CD8-positive, alpha-beta T cell (primary cell): ENCODE measurements at regions of chr17 and their contacts with region 1.

Region 1: GRCh38 chr17:7687908-7688807 is at the start of gene WRAP53:
- DNase-seq: peak; percentile 93 to 97 (median 95)
- ATAC-seq: peak; percentile 77
- H3K4me3 ChIP-seq: peak within 1 kb of the TSS; percentile 81 to 92
- H3K4me3 Mint-ChIP-seq: peak within 1 kb of the TSS; percentile 97
- H3K27ac ChIP-seq: peak within 1 kb of the TSS; percentile 98 to 100
- H3K27ac Mint-ChIP-seq: peak within 1 kb of the TSS; percentile 100
- H3K4me1 ChIP-seq: peaks cover 32% of the 10 kb centered on the region
- H3K4me1 Mint-ChIP-seq: peaks cover 37% of the 10 kb centered on the region
- H3K27me3 ChIP-seq: no peaks in the 10 kb centered on the region
- H3K27me3 Mint-ChIP-seq: no peaks in the 10 kb centered on the region
- CTCF ChIP-seq: peak; percentile 98
- total RNA-seq, gene WRAP53: 5.2 to 6.6 TPM

Region 2: GRCh38 chr17:7045909-7046724 is 642.0 kb before region 1 on chr17:
- CTCF ChIA-PET with region 1: interaction called, 3 read pairs
- POLR2A ChIA-PET with region 1: no interaction called
- intact Hi-C with region 1: loop called (anchors 1 to 5 kb)
- DNase-seq: peak in 6 of 9 experiments; percentile 43 to 88 (median 59)
- ATAC-seq: peak; percentile 34
- H3K4me3 ChIP-seq: peak overlapping the region; percentile 42 to 58
- H3K4me3 Mint-ChIP-seq: peak overlapping the region; percentile 79
- H3K27ac ChIP-seq: peak overlapping the region; percentile 47 to 73
- H3K27ac Mint-ChIP-seq: peak overlapping the region; percentile 88
- H3K4me1 ChIP-seq: peaks cover 35% of the 10 kb centered on the region
- H3K4me1 Mint-ChIP-seq: peaks cover 36% of the 10 kb centered on the region
- H3K27me3 ChIP-seq: no peaks in the 10 kb centered on the region
- H3K27me3 Mint-ChIP-seq: no peaks in the 10 kb centered on the region
- CTCF ChIP-seq: peak; percentile 89

Region 3: DNA sequence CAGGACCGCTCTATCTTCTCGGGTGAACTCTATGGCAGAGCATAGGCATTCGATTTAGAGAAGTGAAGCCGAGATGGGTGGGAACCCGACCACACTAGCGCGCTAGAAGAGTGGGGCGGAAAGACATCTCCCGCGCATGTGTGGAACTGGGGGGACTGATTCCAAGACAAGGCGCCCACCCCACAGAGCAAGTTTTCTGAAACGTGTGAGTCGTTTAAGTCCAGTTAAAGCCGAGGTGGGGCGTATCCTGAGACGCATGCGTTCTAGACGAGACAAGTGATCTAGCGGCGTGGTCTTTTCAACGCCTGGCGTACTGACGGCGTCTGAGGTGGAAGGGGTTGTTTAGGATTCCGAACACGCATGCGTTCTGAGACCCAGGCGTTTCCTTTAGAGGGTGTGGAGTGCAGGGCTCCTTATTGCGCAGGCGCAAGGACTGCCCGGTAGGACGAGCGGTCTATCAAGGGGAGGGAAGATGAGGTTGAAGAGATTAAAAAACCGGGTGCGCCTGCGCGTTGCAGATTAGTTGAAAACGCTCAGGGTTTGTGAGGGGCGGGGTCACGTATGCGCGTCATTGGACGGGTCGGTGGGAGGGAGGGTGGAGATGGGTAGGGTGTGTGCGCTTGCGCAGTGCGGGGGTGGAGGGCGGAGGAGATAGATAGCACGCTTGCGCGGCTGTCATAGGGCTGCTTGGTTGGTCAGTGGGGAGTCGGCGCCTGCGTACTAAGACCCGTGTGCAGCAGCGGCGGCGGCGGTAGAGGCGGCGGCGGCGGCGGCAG is 381.1 kb before region 1 on chr17 and contains the start of gene EIF5A:
- CTCF ChIA-PET with region 1: no interaction called
- POLR2A ChIA-PET with region 1: no interaction called
- intact Hi-C with region 1: loop called (anchors 1 to 2 kb)
- DNase-seq: peak; percentile 100
- ATAC-seq: peak; percentile 67
- H3K4me3 ChIP-seq: peak within 1 kb of the TSS; percentile 66 to 92
- H3K4me3 Mint-ChIP-seq: peak within 1 kb of the TSS; percentile 98
- H3K27ac ChIP-seq: peak within 1 kb of the TSS; percentile 91 to 94
- H3K27ac Mint-ChIP-seq: peak within 1 kb of the TSS; percentile 99
- H3K4me1 ChIP-seq: peaks cover 25% of the 10 kb centered on the region
- H3K4me1 Mint-ChIP-seq: peaks cover 40% of the 10 kb centered on the region
- H3K27me3 ChIP-seq: no peaks in the 10 kb centered on the region
- H3K27me3 Mint-ChIP-seq: no peaks in the 10 kb centered on the region
- CTCF ChIP-seq: no peak
- total RNA-seq, gene EIF5A: 581 to 613 TPM

Region 4: DNA sequence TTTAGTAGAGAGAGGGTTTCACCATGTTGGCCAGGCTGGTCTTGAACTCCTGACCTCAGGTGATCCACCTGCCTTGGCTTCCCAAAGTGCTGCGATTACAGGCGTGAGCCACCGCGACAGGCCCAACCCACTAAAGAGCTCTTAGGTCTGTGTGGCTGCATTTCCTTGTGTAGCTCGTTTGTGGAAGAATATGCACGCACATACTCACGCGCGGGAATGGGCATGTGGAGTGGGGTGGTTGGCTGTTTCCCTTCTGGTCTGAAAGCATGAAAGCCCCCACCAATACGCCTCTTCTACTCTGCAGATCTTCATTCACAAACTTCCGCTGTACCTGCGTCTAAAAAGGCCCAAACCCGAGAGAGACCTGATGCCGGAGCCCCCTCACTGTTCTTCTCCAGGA is 233.2 kb before region 1 on chr17:
- CTCF ChIA-PET with region 1: no interaction called
- POLR2A ChIA-PET with region 1: interaction called, 8 read pairs
- intact Hi-C with region 1: loop called in 1 of 2 experiments (anchors 1 kb)
- DNase-seq: no peak
- ATAC-seq: peak; percentile 35
- H3K4me3 ChIP-seq: peak overlapping the region; percentile 82 to 83
- H3K4me3 Mint-ChIP-seq: peak overlapping the region; percentile 98
- H3K27ac ChIP-seq: peak overlapping the region; percentile 60 to 74
- H3K27ac Mint-ChIP-seq: peak overlapping the region; percentile 91
- H3K4me1 ChIP-seq: peaks cover 15% of the 10 kb centered on the region
- H3K4me1 Mint-ChIP-seq: peaks cover 24% of the 10 kb centered on the region
- H3K27me3 ChIP-seq: no peaks in the 10 kb centered on the region
- H3K27me3 Mint-ChIP-seq: no peaks in the 10 kb centered on the region
- CTCF ChIP-seq: no peak

Region 5: GRCh38 chr17:7583253-7584109 is 104.7 kb before region 1 on chr17 and contains the start of gene MPDU1:
- CTCF ChIA-PET with region 1: interaction called, 8 read pairs
- POLR2A ChIA-PET with region 1: interaction called, 67 read pairs
- intact Hi-C with region 1: loop called in 1 of 2 experiments (anchors 1 kb)
- DNase-seq: peak; percentile 85 to 98 (median 94)
- ATAC-seq: peak; percentile 83
- H3K4me3 ChIP-seq: peak within 1 kb of the TSS; percentile 90 to 93
- H3K4me3 Mint-ChIP-seq: peak within 1 kb of the TSS; percentile 100
- H3K27ac ChIP-seq: peak within 1 kb of the TSS; percentile 92 to 99
- H3K27ac Mint-ChIP-seq: peak within 1 kb of the TSS; percentile 100
- H3K4me1 ChIP-seq: peaks cover 40% of the 10 kb centered on the region
- H3K4me1 Mint-ChIP-seq: peaks cover 47% of the 10 kb centered on the region
- H3K27me3 ChIP-seq: no peaks in the 10 kb centered on the region
- H3K27me3 Mint-ChIP-seq: no peaks in the 10 kb centered on the region
- CTCF ChIP-seq: no peak
- total RNA-seq, gene MPDU1: 16.6 to 17.2 TPM

Region 6: DNA sequence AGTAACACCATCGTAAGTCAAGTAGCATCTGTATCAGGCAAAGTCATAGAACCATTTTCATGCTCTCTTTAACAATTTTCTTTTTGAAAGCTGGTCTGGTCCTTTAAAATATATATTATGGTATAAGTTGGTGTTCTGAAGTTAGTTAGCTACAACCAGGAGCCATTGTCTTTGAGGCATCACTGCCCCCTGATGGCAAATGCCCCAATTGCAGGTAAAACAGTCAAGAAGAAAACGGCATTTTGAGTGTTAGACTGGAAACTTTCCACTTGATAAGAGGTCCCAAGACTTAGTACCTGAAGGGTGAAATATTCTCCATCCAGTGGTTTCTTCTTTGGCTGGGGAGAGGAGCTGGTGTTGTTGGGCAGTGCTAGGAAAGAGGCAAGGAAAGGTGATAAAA is 14.9 kb before region 1 on chr17:
- CTCF ChIA-PET with region 1: interaction called, 31 read pairs
- POLR2A ChIA-PET with region 1: interaction called, 30 read pairs
- intact Hi-C with region 1: no loop called
- DNase-seq: peak in 3 of 9 experiments; percentile 35 to 42 (median 35)
- ATAC-seq: no peak
- H3K4me3 ChIP-seq: no peak overlapping the region
- H3K4me3 Mint-ChIP-seq: no peak overlapping the region
- H3K27ac ChIP-seq: no peak overlapping the region
- H3K27ac Mint-ChIP-seq: no peak overlapping the region
- H3K4me1 ChIP-seq: no peaks in the 10 kb centered on the region
- H3K4me1 Mint-ChIP-seq: peaks cover 8% of the 10 kb centered on the region
- H3K27me3 ChIP-seq: no peaks in the 10 kb centered on the region
- H3K27me3 Mint-ChIP-seq: no peaks in the 10 kb centered on the region
- CTCF ChIP-seq: peak; percentile 31

Region 7: DNA sequence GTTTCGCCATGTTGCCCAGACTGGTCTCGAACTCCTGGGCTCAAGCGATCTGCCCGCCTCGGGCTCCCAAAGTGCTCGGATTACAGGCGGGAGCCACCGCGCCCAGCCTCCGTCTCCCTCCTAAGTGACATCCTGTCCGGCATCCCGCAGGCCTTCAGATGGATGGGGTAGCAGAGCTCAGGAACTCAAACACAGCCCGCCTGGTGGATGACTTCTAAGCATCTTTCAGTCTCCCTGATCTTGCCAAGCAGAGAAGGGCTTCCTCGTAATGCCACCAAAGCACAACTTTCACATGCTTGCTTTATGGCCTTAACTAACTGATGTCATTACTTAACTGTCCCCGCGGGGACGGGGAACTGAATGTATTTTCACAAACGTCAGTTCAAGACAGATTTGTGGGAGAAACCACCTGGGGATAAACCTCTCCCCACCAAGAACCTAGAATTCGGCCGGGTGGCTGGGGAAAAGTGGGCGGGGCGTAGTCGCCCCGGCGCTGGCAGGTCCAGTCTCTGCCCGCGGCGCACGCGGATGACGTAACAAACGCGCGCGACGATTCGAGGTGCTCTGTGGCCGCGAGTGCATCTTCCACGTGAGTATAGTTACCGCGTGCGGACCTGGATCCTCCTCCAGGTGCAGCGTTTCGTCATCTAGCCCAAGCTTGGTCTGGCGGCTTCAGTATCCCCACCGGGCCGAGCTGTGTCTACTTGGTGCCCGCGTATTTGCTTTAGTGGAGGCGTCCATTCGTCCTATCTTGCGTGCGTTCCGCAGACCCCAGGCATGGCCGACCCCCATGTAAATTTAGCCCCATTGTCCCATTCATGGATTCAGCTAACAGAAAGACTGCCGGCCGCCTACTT is 560.8 kb after region 1 on chr17 and contains the start of gene PFAS:
- CTCF ChIA-PET with region 1: no interaction called
- POLR2A ChIA-PET with region 1: interaction called, 6 read pairs
- intact Hi-C with region 1: loop called in 1 of 2 experiments (anchors 5 kb)
- DNase-seq: peak; percentile 92 to 98 (median 96)
- ATAC-seq: peak; percentile 39
- H3K4me3 ChIP-seq: peak within 1 kb of the TSS; percentile 84 to 95
- H3K4me3 Mint-ChIP-seq: peak within 1 kb of the TSS; percentile 98
- H3K27ac ChIP-seq: peak within 1 kb of the TSS; percentile 97 to 98
- H3K27ac Mint-ChIP-seq: peak within 1 kb of the TSS; percentile 100
- H3K4me1 ChIP-seq: peaks cover 34% of the 10 kb centered on the region
- H3K4me1 Mint-ChIP-seq: peaks cover 48% of the 10 kb centered on the region
- H3K27me3 ChIP-seq: no peaks in the 10 kb centered on the region
- H3K27me3 Mint-ChIP-seq: no peaks in the 10 kb centered on the region
- CTCF ChIP-seq: no peak
- total RNA-seq, gene PFAS: 23.8 to 25.0 TPM